ENCODE measurements at regions of chr16 and their contacts with region 1.

Region 1: GRCh38 chr16:58733671-58734458 is at the start of gene GOT2:
- DNase-seq: peak; percentile 95
- H3K4me3 Mint-ChIP-seq: peak within 1 kb of the TSS; percentile 93
- H3K27ac Mint-ChIP-seq: peak within 1 kb of the TSS; percentile 98
- H3K4me1 Mint-ChIP-seq: peaks cover 17% of the 10 kb centered on the region
- H3K27me3 Mint-ChIP-seq: peaks cover 2% of the 10 kb centered on the region
- total RNA-seq, gene GOT2: 141 and 144 TPM in 2 replicates

Region 2: DNA sequence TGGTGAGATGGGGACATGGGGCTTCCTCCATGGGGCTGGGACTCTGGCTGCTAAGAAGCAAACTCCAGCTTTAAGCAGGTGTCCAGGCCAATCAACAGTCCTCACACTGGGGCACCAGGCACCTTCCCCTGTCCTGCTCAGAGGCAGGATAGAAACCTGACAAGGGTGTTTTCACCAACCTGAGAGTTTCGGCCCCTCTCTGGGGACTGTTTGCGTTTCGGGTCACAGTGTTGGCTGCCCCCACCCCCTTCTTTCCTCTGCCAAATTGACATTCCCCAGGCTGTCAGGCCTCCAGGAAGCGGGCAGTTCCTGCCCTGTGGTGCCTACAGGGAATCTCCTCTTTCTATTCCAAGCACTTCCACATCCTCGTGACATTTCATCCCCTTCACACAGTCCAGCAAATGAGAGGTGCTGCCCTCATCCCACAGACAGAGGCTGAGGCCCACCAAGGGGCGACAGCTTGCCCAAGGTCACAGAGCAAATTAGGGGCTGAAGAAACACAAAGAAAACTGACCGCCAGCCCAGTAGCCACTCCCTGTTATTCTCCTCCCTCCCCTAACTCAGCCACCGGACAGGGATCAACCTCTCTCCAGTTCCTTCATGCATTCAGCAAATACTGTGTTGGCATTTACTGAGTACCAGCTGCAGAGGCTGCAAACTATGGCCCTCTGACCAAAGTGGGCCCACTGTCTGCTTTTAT is 670.3 kb before region 1 on chr16:
- intact Hi-C with region 1: no loop called
- DNase-seq: no peak
- H3K4me3 Mint-ChIP-seq: no peak overlapping the region
- H3K27ac Mint-ChIP-seq: no peak overlapping the region
- H3K4me1 Mint-ChIP-seq: no peaks in the 10 kb centered on the region
- H3K27me3 Mint-ChIP-seq: no peaks in the 10 kb centered on the region

Region 3: DNA sequence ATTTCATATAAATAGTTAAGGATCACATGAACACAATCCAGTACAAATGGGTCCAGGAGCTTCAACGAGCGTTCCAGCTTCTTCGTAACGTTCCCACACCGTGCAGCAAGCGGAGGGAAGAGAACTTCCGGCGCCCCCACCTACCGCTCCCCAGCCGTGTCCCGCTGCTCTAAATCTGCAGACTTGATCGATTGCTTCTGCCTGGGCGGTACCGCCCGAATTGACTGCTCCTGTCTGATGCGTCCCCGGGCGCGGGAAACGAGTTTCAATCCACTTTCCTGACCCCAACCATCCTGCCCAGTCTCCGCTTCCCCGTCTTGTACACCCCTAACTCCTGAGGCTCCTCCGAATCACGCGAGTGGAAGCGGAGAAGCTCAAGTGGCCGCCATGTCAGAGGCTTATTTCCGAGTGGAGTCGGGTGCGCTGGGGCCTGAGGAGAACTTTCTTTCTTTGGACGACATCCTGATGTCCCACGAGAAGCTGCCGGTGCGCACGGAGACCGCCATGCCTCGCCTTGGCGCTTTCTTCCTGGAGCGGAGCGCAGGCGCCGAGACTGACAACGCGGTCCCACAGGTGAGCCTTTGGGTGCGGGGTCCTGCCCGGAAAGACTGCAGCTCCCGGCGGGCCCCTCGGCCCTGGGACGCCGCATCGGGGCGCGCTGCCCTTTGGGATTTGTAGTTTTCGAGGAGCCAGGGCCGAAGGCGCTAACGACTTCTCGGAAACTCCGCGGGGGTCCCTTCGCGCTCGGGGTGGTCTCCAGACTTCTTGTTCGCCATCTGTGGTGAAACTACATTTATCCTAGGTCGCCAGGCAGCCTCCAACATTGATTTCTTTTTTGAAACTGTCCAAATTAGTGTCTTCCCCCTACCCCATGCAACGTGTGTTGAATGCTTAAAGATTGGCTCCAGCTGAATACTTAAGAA is 341.4 kb before region 1 on chr16 and contains the start of gene GINS3:
- intact Hi-C with region 1: loop called (anchors 1 kb)
- DNase-seq: peak; percentile 96
- H3K4me3 Mint-ChIP-seq: peak within 1 kb of the TSS; percentile 98
- H3K27ac Mint-ChIP-seq: peak within 1 kb of the TSS; percentile 96
- H3K4me1 Mint-ChIP-seq: peaks cover 17% of the 10 kb centered on the region
- H3K27me3 Mint-ChIP-seq: peaks cover 16% of the 10 kb centered on the region
- total RNA-seq, gene GINS3: 24.1 and 25.0 TPM in 2 replicates

Region 4: DNA sequence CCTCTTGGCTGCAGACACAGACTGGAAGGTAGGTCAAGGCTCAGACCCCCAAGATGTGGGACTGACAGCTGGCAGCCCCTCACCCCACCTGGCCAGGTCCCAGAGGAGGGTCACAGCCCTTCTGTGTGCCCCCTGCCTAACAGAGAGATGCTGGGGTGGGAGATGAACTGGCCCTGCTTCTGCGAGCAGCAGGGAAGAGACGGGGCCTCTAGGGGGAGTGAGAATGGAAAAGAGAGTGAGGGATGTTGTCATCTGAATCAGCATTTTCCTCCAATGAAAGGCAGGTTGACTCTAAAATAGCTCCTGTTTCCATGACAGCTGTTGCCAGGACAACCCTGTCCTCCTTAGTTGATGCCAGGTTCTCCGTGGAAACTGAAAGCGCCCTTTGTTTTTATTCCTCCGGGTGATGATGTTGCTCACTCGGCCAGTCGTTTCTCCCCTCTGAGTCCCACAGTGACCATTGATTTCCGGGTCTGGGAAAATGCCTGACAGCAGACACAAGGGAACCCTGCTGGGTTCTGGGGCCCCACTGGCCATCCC is 238.8 kb before region 1 on chr16:
- intact Hi-C with region 1: loop called (anchors 1 kb)
- DNase-seq: peak; percentile 92
- H3K4me3 Mint-ChIP-seq: peak overlapping the region; percentile 45
- H3K27ac Mint-ChIP-seq: peak overlapping the region; percentile 85
- H3K4me1 Mint-ChIP-seq: peaks cover 7% of the 10 kb centered on the region
- H3K27me3 Mint-ChIP-seq: no peaks in the 10 kb centered on the region

Region 5: GRCh38 chr16:58684354-58685083 is 49.3 kb before region 1 on chr16 and contains the start of gene SLC38A7:
- intact Hi-C with region 1: loop called (anchors 1 kb)
- DNase-seq: peak; percentile 93
- H3K4me3 Mint-ChIP-seq: peak within 1 kb of the TSS; percentile 92
- H3K27ac Mint-ChIP-seq: peak within 1 kb of the TSS; percentile 83
- H3K4me1 Mint-ChIP-seq: peaks cover 13% of the 10 kb centered on the region
- H3K27me3 Mint-ChIP-seq: peaks cover 2% of the 10 kb centered on the region
- total RNA-seq, gene SLC38A7: 7.8 and 10.8 TPM in 2 replicates

Region 6: GRCh38 chr16:58999762-59000161 is 265.9 kb after region 1 on chr16:
- intact Hi-C with region 1: no loop called
- DNase-seq: no peak
- H3K4me3 Mint-ChIP-seq: no peak overlapping the region
- H3K27ac Mint-ChIP-seq: no peak overlapping the region
- H3K4me1 Mint-ChIP-seq: no peaks in the 10 kb centered on the region
- H3K27me3 Mint-ChIP-seq: no peaks in the 10 kb centered on the region

Measured in activated CD4-positive, alpha-beta T cell treated with anti-CD3 and anti-CD28 coated beads, Interleukin-2, amount 10 ng/mL, durations not matched to agents 24 days and 14 days (primary cell).